Heart left ventricle (tissue), 16 donors: ENCODE measurements at regions of chr7 and their contacts with region 1.

Region 1: GRCh38 chr7:117458977-117459583 is 20.7 kb upstream of the CFTR start:
- DNase-seq: no peak
- ATAC-seq: no peak
- H3K4me3 ChIP-seq: no peak overlapping the region
- H3K27ac ChIP-seq: no peak overlapping the region
- H3K4me1 ChIP-seq: no peaks in the 10 kb centered on the region
- H3K27me3 ChIP-seq: no peaks in the 10 kb centered on the region
- CTCF ChIP-seq: peak; percentile 32 to 65 (median 52)
- POLR2A ChIP-seq: no peak

Region 2: GRCh38 chr7:117673839-117674238 is 214.8 kb after region 1 on chr7:
- intact Hi-C with region 1: loop called in 3 of 10 experiments (anchors 2 to 5 kb)
- DNase-seq: no peak
- ATAC-seq: peak in 2 of 4 donors; percentile 36 to 60
- H3K4me3 ChIP-seq: no peak overlapping the region
- H3K27ac ChIP-seq: no peak overlapping the region
- H3K4me1 ChIP-seq: no peaks in the 10 kb centered on the region
- H3K27me3 ChIP-seq: peaks cover 0 to 6% (median 0%) of the 10 kb centered on the region in 9 donors
- CTCF ChIP-seq: peak in 8 of 12 donors; percentile 7 to 26 (median 22)
- POLR2A ChIP-seq: no peak